Activated B cell treated with CpG ODN at 0.5 μM for 24 hours (primary cell): ENCODE measurements at regions of chr18 and their contacts with region 1.

Region 1: GRCh38 chr18:35343936-35344735 is at the start of gene ZNF24:
- DNase-seq: peak; percentile 92
- ATAC-seq: peak; percentile 83
- H3K4me3 Mint-ChIP-seq: peak within 1 kb of the TSS; percentile 98
- H3K27ac Mint-ChIP-seq: peak within 1 kb of the TSS; percentile 96
- H3K4me1 Mint-ChIP-seq: peaks cover 59% of the 10 kb centered on the region
- H3K27me3 Mint-ChIP-seq: no peaks in the 10 kb centered on the region
- CTCF ChIP-seq: no peak
- total RNA-seq, gene ZNF24: 72.5 and 75.8 TPM in 2 replicates

Region 2: DNA sequence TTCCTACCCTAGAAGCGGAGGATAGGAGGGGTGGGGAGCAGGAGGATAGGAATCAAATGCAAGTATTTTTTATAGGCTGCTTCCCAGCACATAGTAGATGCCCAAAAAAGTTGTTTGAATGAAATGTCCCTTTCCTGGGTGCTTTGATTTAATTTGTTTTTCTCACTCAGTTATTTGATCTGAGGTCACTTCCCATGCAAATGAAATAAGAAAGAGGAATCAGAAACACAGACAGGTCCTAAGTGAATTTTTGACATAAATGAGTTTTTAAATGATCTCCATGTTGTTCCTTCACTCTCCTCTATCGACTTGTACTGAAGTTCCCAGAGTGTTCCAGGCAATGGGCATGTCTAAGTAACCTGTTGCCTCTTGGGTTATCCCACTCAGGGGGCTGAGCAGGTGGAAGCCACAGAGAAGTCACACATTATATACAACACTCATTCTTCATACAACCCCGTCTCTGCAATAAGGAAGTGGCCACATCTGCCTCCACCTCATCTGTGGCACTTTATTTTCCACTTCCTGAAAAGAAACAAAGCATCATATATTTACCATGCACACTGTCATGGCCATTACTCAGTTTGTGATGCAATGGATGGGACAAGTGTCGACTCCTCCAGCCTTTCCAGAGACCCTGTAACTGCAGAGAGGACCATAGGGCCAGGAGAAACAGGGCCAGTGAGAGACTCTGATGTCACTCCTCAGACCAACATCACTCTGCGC is 185.2 kb before region 1 on chr18:
- CTCF ChIA-PET with region 1: no interaction called
- POLR2A ChIA-PET with region 1: interaction called, 3 read pairs
- intact Hi-C with region 1: loop called (anchors 1 kb)
- DNase-seq: no peak
- ATAC-seq: peak; percentile 91
- H3K4me3 Mint-ChIP-seq: peak overlapping the region; percentile 73
- H3K27ac Mint-ChIP-seq: peak overlapping the region; percentile 97
- H3K4me1 Mint-ChIP-seq: peaks cover 31% of the 10 kb centered on the region
- H3K27me3 Mint-ChIP-seq: no peaks in the 10 kb centered on the region
- CTCF ChIP-seq: no peak

Region 3: GRCh38 chr18:35240664-35241447 is 103.3 kb before region 1 on chr18 and contains the start of gene ZNF397:
- CTCF ChIA-PET with region 1: no interaction called
- POLR2A ChIA-PET with region 1: interaction called, 33 read pairs
- intact Hi-C with region 1: loop called (anchors 1 kb)
- DNase-seq: peak; percentile 93
- ATAC-seq: peak; percentile 97
- H3K4me3 Mint-ChIP-seq: peak within 1 kb of the TSS; percentile 97
- H3K27ac Mint-ChIP-seq: peak within 1 kb of the TSS; percentile 98
- H3K4me1 Mint-ChIP-seq: peaks cover 22% of the 10 kb centered on the region
- H3K27me3 Mint-ChIP-seq: no peaks in the 10 kb centered on the region
- CTCF ChIP-seq: no peak
- total RNA-seq, gene ZNF397: 35.2 and 48.7 TPM in 2 replicates

Region 4: DNA sequence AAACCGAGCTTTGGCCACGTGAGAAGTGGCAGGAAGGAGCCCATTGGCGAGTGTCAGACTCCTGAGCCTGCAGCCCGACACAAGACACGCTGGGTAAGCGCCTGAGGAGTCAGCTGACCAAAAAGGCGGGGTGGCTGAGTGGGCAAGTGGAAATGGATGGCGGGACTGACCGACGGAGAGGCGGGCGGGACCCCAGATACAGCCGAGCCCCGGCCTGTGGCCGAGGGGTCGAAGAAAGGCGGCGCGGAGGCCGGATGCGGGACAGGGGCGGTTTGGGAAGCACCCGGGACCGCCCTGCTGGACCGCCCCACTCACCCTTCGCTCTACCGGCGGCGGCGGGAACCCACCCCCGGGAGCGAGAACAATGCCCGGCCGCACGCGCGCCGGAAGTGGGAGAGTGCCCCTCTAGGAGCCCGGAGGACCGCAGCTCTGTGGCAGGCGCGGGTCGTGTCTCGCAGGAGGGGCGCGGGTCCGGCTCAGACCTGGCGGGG is 76.9 kb before region 1 on chr18:
- CTCF ChIA-PET with region 1: no interaction called
- POLR2A ChIA-PET with region 1: interaction called, 47 read pairs
- intact Hi-C with region 1: loop called (anchors 1 kb)
- DNase-seq: peak; percentile 72
- ATAC-seq: peak; percentile 89
- H3K4me3 Mint-ChIP-seq: peak overlapping the region; percentile 94
- H3K27ac Mint-ChIP-seq: peak overlapping the region; percentile 93
- H3K4me1 Mint-ChIP-seq: peaks cover 26% of the 10 kb centered on the region
- H3K27me3 Mint-ChIP-seq: no peaks in the 10 kb centered on the region
- CTCF ChIP-seq: no peak

Region 5: GRCh38 chr18:35355140-35355618 is 11.0 kb after region 1 on chr18:
- CTCF ChIA-PET with region 1: interaction called, 24 read pairs
- POLR2A ChIA-PET with region 1: interaction called, 7 read pairs
- intact Hi-C with region 1: loop called (anchors 1 kb)
- DNase-seq: no peak
- ATAC-seq: peak; percentile 100
- H3K4me3 Mint-ChIP-seq: no peak overlapping the region
- H3K27ac Mint-ChIP-seq: no peak overlapping the region
- H3K4me1 Mint-ChIP-seq: peaks cover 5% of the 10 kb centered on the region
- H3K27me3 Mint-ChIP-seq: no peaks in the 10 kb centered on the region
- CTCF ChIP-seq: no peak

Region 6: DNA sequence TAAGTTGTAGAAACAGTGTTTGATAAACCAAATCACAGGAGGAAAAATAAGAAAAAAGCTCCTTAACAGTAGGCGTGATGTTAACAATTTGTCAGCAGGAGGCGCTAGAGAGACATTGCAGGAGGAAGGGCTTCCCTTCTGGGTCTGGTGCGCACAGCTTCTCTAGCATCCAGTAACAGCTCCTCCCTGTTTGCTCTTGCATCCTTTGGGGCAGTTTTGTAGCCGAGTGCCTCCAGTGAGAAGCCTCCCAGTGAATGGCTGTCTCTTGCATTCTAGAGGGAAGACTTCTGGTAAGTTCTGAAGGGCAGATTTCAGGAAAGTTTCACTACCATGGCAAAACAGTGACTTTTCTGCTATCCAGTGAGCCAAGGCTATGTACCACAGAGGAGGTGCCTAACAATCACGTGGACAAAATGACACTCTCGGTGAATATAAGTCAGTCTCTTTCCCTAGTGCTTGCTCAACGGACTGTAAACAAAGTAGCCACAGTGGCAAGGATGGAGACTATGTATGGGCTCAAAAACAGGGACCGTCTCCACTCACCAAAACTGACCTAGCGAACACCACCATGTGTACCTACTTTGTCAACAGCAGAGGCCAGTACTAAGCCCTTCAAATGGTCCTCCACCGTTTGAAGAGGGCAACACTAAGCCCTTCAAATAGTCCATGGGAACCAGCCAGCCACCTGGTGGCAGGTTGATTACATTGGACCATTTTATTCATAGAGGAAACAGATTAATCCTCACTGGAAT is 42.6 kb after region 1 on chr18:
- CTCF ChIA-PET with region 1: interaction called, 5 read pairs
- POLR2A ChIA-PET with region 1: no interaction called
- intact Hi-C with region 1: loop called (anchors 2 kb)
- DNase-seq: no peak
- ATAC-seq: peak; percentile 95
- H3K4me3 Mint-ChIP-seq: no peak overlapping the region
- H3K27ac Mint-ChIP-seq: no peak overlapping the region
- H3K4me1 Mint-ChIP-seq: peaks cover 6% of the 10 kb centered on the region
- H3K27me3 Mint-ChIP-seq: peaks cover 18% of the 10 kb centered on the region
- CTCF ChIP-seq: no peak